Head of caudate nucleus (tissue), 42 donors: ENCODE measurements at regions of chr20 and their contacts with region 1.

Region 1: GRCh38 chr20:34069341-34070078 is 42.5 kb downstream of the EIF2S2 start:
- DNase-seq: peak; percentile 56 to 93 (median 80)

Region 2: DNA sequence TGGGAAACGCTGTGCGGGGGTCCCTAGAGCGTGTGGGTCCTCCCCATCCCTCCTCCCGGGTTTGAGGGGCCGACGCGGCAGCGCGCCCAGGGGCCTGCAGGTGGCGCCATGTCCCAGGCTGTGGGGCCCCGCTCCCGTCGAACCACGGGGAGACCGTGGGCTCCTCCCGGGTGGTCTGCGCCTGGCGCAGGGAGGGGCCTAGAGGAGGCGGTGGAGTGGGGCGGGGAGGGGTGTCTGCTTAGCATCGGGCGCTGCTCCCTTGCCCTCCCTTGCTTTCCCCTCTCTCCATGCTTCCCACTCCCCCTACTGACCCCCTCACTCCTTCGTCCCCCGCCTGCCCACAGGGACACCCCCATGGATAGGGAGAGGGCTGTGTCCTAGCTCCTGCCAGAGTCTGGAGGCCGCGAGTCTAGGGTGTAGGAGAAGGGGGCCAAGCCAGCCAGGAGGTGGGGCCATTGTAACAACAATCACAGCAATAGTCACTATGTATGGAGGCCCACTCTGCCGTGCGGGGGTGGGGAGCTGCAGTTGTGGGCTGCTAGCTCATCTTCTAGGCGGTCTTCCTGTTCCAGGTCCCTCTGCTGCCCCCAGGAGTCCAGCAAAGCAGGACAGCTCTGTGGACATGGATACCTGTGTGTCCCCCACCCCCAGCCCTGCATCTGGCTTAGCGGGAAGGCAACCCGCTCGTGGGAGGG is 206.7 kb before region 1 on chr20:
- intact Hi-C with region 1: loop called (anchors 10 kb)
- DNase-seq: peak in 41 of 42 donors; percentile 7 to 77 (median 44)

Region 3: DNA sequence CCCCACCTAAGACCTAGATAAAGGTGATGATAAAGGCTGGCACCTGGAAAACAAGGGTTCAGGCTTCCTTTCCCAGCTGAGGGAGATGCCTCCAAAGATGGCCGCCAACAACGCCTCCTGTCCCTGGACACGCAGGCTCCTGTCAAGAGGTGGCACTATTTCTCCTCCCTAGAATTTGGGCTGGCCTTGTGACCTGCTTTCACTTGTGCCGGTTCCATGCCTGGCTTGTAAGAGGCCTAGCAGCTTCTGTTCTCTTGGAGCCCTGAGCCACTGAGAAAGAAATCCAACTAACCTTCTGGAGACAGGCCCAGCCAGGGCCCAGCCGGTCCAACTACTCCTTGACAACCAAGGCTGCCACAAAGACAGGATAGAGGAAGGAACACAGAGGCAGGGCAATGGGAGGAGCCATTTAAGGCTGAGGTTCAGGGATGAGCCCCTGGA is 136.0 kb before region 1 on chr20:
- intact Hi-C with region 1: loop called (anchors 5 kb)
- DNase-seq: peak; percentile 37 to 91 (median 78)

Region 4: DNA sequence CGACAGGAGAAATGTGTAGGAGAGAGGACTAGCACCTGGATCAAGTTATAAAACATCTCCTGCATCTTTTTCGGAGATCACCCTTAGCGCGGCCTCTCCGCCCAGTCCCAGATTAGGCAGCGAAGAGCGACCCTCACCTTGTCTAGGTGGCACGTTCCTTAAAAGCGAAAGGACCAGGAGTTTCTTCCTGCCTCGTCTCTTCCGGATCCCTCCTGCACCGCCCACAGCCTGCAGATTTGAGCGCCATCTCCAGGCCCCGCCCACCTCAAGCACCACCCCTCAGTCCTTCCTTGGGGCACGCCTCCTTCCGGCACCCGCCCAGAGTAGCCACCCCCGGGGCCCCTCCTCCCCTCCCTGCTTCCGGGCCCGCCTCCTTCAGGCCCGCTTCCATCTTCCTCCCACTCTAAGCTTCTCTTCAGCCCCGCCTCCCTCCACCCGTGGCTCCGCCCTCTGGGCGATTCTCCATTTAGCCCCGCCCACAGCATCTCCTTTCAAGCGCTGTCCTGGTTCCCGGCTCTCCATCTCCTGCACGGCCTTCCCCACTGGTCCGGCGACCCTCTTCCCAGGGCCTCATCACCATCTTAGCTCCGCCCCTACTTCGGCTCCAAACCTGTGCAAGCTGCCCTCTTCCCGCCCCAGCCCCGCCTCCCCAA is 76.5 kb before region 1 on chr20:
- intact Hi-C with region 1: loop called (anchors 10 kb)
- DNase-seq: peak; percentile 98 to 100 (median 100)

Region 5: DNA sequence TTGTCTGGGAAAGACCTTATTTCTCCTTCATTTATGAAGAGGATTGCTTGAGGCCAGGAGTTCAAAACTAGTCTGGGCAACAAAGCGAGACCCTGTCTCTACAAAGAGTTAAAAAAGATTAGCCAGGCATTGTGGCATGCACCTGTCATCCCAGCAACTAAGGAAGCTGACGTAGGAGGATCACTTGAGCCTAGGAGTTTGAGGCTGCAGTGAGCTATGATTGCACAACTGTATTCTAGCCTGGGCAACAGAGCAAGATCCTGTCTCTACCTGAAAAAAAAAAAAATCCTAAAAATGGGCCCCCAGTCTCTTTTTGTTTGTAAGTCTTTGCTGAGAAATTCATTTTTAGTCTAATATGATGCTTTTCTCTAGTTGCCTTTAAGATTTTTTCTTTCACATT is 71.8 kb after region 1 on chr20:
- intact Hi-C with region 1: no loop called
- DNase-seq: no peak